ENCODE measurements at regions of chr3 and their contacts with region 1.

Region 1: DNA sequence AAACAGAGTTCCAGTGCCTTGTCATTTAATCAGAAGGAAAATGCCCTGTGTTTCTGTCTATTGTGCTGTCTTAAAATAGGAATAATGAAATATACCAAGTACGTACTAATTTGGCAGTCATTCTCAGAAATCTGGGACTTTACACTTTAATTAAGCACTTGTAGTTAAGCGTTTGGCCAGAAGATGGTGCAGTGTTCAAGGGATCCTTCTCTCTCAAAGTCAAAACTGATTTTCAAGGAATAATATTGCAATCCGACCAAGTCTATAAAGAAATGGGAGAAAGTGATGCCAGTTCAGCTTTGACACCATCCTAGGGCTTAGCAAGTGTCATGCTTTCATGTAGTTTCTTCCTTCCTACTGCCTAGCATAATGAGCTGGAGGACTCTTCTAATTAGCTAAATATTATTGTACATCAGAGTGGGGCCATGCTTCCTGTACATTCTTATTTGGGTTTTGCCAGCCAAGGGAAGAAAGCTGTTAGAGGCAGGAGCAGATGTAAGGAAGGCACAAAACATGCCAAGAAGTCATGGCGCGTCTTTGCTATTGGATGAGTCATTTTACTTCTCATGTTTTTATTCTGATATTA is 64.8 kb downstream of the SAMMSON start:
- DNase-seq: no peak
- ATAC-seq: no peak

Region 2: DNA sequence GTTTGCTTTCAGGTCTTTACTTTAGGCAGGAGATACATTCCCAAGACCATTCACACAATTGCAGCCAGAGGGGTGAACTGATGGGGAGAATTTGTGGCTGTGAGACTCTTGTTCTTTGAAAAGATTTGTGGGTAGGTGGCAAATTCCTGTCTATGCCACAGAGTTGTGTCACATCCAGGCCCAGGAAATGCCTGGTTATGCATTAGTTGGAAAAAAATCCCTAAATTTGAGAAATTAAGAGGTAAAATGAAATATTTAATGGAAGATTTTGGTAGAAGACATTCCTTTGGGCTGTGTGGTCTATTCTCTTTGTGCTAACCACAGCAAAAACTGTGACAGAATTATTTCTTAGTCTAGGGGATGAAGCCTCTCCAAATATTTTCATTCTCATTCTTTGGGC is 35.9 kb before region 1 on chr3:
- intact Hi-C with region 1: no loop called
- DNase-seq: no peak
- ATAC-seq: no peak

Region 3: DNA sequence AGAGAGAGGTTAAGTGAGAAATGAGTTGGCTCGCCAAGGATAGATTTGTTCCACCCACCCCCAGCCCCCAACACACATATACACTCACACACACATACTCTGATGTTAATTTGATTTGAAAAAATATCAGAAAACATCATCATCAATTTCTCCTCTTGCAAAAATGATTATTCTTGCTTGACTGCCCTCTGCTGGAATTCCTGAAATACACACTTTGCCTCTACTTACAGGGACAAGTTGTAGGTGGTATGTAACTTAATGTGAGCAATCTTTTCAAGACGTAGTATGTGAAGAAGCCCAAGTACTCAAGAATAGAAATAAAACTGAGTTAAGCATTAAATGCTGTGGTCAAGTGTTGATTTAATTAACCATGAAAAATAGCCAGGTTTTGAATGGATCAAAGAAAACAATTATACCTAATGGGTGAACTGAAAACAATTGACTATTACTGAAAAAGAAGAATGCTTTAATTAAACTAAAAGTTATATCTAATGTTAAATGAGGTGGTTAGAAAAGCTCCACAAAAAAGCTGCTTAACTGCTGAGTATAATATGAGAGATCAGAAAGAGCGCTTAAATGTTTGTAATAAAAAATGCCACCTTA is 294.8 kb after region 1 on chr3:
- intact Hi-C with region 1: loop called (anchors 2 kb)
- DNase-seq: no peak
- ATAC-seq: no peak